ENCODE measurements at regions of chr22 and their contacts with region 1.

Region 1: DNA sequence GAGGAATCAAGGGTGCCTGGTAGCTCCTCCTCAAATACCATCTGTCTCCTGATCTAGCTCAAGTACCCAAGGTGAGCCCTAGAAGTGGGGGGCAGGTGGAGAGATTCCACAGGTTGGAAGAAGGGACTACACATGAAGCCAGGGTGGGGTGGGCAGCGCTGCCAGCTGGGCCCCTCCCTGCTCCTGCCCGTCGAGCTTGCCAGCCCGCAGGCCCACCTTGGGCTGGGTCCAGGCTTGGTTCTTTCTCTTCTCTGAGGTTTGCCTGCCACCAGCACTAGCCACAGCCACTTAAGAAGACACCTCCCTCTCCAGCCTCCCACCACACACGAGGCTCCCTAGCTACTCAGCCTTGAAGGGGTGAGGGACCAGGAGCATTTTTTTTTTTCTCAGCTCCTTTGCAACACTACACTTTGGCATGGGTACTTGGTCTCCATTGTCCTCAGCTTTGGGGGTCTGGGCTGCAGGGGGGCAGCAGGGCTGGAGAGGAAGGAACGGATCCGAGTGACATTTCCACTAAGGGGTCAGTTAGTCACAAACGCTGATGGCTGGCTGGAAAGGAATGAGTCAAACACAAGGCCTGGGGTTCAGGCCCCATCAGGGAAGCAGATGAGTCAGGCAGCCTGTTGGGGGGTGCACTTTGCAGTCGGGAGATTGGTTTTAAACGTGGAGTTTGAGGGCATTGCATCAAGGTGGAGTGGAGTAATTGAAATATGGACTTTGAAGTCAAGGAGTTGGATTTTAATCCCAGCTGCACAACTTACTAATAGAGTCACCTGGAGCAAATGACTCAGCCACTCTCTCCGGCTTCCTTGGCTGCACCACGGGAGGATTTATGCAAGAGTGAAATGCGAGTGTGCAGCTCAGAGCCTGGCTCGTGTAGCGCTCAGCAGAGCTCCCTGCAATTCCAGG is 7.4 kb upstream of the NPTXR start:
- DNase-seq: no peak
- H3K4me3 ChIP-seq: no peak overlapping the region
- H3K27ac ChIP-seq: no peak overlapping the region
- H3K4me1 ChIP-seq: no peaks in the 10 kb centered on the region
- H3K27me3 ChIP-seq: peaks cover 0 to 5% (median 2%) of the 10 kb centered on the region in 5 experiments

Region 2: DNA sequence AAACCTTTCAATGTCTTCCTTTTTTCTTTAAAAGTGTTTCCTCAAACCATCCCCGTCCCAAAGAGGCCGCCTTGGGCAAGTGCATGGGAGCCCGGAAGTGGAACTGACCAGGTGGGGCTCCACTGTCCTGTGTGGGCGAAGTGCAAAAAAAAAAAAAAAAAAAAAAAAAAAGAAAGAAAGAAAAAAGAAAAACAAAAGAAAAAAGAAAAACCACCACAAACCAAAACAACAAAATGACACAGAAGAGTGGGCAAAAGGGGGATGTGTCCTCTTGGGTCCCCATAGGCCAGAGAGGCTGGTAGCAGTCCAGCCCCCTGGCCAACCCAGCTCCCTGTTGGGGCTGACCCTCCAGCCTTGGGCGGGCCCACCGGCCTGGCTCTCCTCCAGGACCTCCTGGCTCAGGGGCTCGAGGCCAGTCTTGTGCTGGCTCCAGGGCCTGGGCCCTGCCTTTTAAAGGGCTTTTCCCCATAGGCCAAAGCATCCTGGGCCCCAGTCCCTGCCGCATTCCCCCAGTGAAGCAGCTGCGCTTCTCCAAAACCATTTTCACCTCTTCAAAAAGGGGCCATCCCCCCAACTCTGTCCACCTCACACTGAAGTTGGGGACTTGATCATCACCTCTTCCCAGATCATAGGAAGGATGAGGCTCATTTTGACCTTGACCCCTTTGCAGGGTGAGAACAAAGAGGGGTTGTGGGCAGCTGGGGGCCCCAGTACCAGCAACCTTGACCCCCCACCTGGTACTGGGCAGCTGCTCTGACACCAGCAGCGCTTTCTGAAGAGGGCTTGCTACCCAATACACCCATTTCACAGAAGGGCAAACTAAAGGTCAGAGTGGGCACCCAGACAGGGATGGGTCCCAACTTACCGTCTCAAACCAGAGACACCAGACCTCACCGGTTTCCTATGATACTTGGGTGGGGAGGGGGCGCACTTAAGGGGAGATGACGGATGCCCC is 11.5 kb after region 1 on chr22:
- CTCF ChIA-PET with region 1: interaction called, 11 read pairs
- POLR2A ChIA-PET with region 1: no interaction called
- DNase-seq: no peak
- H3K4me3 ChIP-seq: no peak overlapping the region
- H3K27ac ChIP-seq: no peak overlapping the region
- H3K4me1 ChIP-seq: no peaks in the 10 kb centered on the region
- H3K27me3 ChIP-seq: no peaks in the 10 kb centered on the region

Measured in common myeloid progenitor, CD34-positive (primary cell).